ENCODE measurements at regions of chr5 and their contacts with region 1.

Region 1: GRCh38 chr5:138093036-138093435 is 9.2 kb downstream of the WNT8A start:
- DNase-seq: no peak
- H3K4me3 Mint-ChIP-seq: no peak overlapping the region
- H3K27ac Mint-ChIP-seq: no peak overlapping the region
- H3K4me1 Mint-ChIP-seq: peaks cover 27% of the 10 kb centered on the region
- H3K27me3 Mint-ChIP-seq: peaks cover 23% of the 10 kb centered on the region

Region 2: GRCh38 chr5:137880313-137880712 is 212.7 kb before region 1 on chr5:
- CTCF ChIA-PET with region 1: no interaction called
- POLR2A ChIA-PET with region 1: no interaction called
- DNase-seq: no peak
- H3K4me3 Mint-ChIP-seq: no peak overlapping the region
- H3K27ac Mint-ChIP-seq: no peak overlapping the region
- H3K4me1 Mint-ChIP-seq: no peaks in the 10 kb centered on the region
- H3K27me3 Mint-ChIP-seq: no peaks in the 10 kb centered on the region

Region 3: DNA sequence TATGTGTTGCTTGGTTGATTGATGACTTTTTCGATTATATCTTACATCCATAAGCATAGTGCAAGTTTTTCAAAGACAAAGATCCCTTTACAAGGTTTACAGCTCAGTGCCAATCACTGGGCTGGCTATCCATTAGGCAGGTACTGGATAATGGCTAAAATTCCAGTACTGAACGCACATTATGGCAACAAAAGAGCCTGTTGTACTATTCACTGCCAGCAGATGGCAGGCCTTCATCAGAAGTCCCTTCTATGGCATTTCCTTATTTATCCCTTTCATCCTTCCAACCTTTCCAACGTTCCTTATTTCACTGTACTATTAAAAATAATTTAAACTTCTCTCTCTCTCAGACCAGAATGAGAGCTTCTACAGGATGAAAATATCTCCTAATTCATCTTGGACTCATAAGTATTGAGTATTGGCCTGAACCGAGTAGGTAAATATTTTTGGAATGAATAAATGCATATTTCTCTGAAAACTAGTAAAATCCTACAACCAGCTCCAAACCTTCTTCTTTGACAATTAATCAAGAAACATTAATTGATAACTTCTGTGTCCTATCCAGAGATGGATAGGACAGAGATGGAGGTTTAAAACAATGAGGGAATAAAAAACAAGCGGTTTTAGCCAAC is 15.9 kb before region 1 on chr5:
- CTCF ChIA-PET with region 1: interaction called, 35 read pairs
- POLR2A ChIA-PET with region 1: interaction called, 4 read pairs
- DNase-seq: peak; percentile 57
- H3K4me3 Mint-ChIP-seq: no peak overlapping the region
- H3K27ac Mint-ChIP-seq: no peak overlapping the region
- H3K4me1 Mint-ChIP-seq: peaks cover 17% of the 10 kb centered on the region
- H3K27me3 Mint-ChIP-seq: peaks cover 6% of the 10 kb centered on the region

Region 4: GRCh38 chr5:138305797-138306196 is 212.8 kb after region 1 on chr5:
- CTCF ChIA-PET with region 1: no interaction called
- POLR2A ChIA-PET with region 1: no interaction called
- DNase-seq: no peak
- H3K4me3 Mint-ChIP-seq: no peak overlapping the region
- H3K27ac Mint-ChIP-seq: no peak overlapping the region
- H3K4me1 Mint-ChIP-seq: peaks cover 2% of the 10 kb centered on the region
- H3K27me3 Mint-ChIP-seq: no peaks in the 10 kb centered on the region

Measured in activated CD4-positive, alpha-beta memory T cell treated with anti-CD3 and anti-CD28 coated beads, Interleukin-2, amount 10 ng/mL, durations not matched to agents 7 days and 5 days (primary cell).